Heart left ventricle (tissue), 16 donors: ENCODE measurements at regions of chr5 and their contacts with region 1.

Region 1: DNA sequence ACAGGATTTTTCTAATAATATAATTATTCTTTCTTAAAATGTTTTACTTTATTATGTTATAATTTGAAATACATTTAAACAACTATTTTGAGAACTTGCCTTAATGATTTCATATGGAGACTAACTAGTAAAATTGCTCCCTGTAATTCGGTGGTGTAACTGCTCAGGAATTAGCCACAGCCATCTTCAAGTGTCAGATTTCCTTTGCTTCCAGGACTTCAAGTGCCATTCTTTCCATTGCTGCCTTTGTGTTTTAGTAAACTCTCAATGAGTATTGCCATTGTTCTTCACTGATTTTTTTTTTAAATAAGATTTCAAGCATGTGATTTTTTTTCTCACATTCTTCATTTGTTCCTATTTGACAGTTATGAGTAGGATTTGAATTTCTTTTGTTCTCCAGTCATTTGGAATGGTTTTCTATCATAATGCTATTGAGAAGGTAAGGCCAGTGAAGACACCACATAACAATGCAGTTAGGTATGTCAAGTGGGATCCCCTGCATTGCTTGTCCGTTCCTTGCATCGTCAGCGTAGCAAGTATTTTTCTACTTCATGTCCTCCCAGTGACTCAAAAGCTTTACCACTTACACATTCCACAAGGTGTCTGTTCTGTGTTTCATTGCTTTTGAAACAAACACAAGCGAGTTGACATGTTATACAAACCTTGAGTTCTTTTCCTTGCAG is 83.7 kb downstream of the LNPEP start:
- DNase-seq: no peak
- ATAC-seq: no peak
- H3K4me3 ChIP-seq: no peak overlapping the region
- H3K27ac ChIP-seq: peak overlapping the region in 1 of 12 donors; percentile 18
- H3K4me1 ChIP-seq: no peaks in the 10 kb centered on the region
- H3K27me3 ChIP-seq: no peaks in the 10 kb centered on the region
- CTCF ChIP-seq: no peak
- POLR2A ChIP-seq: no peak

Region 2: DNA sequence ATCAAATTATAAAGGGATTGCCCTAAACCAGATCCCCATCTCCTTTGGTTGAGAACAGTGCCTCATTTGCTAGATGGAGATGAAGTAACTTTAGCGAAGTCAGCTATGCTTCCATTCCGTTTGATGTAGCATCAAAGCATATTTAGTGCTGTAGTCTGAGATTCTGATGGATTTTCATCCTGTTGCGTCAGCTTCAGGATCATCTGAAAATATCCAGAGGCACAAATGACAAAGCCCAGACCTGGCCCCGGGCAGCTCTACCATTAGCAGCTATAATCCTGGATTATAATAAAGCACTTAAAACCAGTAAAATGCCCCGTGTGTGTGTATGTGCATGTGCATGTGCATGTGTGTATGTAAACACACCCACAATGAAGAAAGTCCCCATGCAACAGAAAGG is 256.6 kb before region 1 on chr5:
- intact Hi-C with region 1: loop called in 1 of 10 experiments (anchors 10 kb)
- DNase-seq: no peak
- ATAC-seq: no peak
- H3K4me3 ChIP-seq: no peak overlapping the region
- H3K27ac ChIP-seq: no peak overlapping the region
- H3K4me1 ChIP-seq: no peaks in the 10 kb centered on the region
- H3K27me3 ChIP-seq: no peaks in the 10 kb centered on the region
- CTCF ChIP-seq: no peak
- POLR2A ChIP-seq: no peak